ENCODE measurements at regions of chr6 and their contacts with region 1.

Region 1: DNA sequence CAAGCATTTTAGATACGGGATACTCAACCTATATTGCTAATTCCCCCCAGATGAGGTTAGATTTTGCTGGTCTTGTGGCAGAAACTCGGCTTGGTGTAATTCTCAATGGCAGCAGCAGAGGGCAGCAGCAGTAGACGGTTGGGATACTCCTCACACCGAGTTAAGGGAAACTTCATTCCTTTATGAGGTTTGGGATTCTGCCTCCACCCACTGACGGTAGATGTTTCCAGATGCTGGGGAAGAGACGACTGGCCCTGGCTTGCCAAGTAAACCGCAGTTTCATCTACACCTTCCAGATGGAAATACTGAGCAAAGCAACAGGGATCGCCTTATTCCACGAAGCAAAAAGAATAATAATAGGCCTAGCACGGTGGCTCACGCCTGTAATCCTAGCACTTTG is 8.2 kb upstream of the TBC1D7 start:
- DNase-seq: peak; percentile 14 to 80
- H3K4me3 ChIP-seq: no peak overlapping the region
- H3K27ac ChIP-seq: no peak overlapping the region
- H3K4me1 ChIP-seq: no peaks in the 10 kb centered on the region
- H3K27me3 ChIP-seq: no peaks in the 10 kb centered on the region
- CTCF ChIP-seq: peak; percentile 84 to 96 (median 91)

Region 2: DNA sequence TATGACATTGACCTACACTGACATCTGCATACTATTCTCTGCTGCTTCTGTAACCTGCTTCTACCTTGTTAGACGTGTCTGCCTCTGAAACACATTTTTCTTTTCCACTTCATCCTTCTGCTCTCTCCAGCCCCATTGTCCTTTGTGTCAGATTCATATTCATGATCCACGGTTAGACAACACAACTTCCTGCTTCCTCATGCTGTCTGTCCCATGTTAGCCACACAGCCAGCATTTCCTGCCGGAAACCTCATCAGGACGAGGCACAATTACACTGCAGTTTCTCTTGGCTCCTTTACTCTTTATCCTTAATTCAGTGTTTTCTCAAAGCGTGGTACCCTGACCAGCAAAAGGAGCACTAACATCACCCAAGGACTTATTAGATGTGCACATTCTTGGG is 158.4 kb before region 1 on chr6:
- intact Hi-C with region 1: no loop called
- DNase-seq: no peak
- H3K4me3 ChIP-seq: no peak overlapping the region
- H3K27ac ChIP-seq: no peak overlapping the region
- H3K4me1 ChIP-seq: no peaks in the 10 kb centered on the region
- H3K27me3 ChIP-seq: no peaks in the 10 kb centered on the region
- CTCF ChIP-seq: no peak

Region 3: GRCh38 chr6:13296536-13296997 is 40.0 kb before region 1 on chr6:
- intact Hi-C with region 1: no loop called
- DNase-seq: no peak
- H3K4me3 ChIP-seq: no peak overlapping the region
- H3K27ac ChIP-seq: no peak overlapping the region
- H3K4me1 ChIP-seq: no peaks in the 10 kb centered on the region
- H3K27me3 ChIP-seq: no peaks in the 10 kb centered on the region
- CTCF ChIP-seq: no peak

Region 4: GRCh38 chr6:13413900-13414555 is 77.5 kb after region 1 on chr6:
- intact Hi-C with region 1: loop called (anchors 5 kb)
- DNase-seq: peak; percentile 25 to 91
- H3K4me3 ChIP-seq: no peak overlapping the region
- H3K27ac ChIP-seq: peak overlapping the region; percentile 88 to 94
- H3K4me1 ChIP-seq: peaks cover 5 to 35% of the 10 kb centered on the region in 2 donors
- H3K27me3 ChIP-seq: no peaks in the 10 kb centered on the region
- CTCF ChIP-seq: no peak

Region 5: GRCh38 chr6:13538084-13538483 is 201.5 kb after region 1 on chr6:
- intact Hi-C with region 1: loop called (anchors 1 kb)
- DNase-seq: no peak
- H3K4me3 ChIP-seq: no peak overlapping the region
- H3K27ac ChIP-seq: no peak overlapping the region
- H3K4me1 ChIP-seq: no peaks in the 10 kb centered on the region
- H3K27me3 ChIP-seq: no peaks in the 10 kb centered on the region
- CTCF ChIP-seq: peak; percentile 30 to 59 (median 39)

Region 6: DNA sequence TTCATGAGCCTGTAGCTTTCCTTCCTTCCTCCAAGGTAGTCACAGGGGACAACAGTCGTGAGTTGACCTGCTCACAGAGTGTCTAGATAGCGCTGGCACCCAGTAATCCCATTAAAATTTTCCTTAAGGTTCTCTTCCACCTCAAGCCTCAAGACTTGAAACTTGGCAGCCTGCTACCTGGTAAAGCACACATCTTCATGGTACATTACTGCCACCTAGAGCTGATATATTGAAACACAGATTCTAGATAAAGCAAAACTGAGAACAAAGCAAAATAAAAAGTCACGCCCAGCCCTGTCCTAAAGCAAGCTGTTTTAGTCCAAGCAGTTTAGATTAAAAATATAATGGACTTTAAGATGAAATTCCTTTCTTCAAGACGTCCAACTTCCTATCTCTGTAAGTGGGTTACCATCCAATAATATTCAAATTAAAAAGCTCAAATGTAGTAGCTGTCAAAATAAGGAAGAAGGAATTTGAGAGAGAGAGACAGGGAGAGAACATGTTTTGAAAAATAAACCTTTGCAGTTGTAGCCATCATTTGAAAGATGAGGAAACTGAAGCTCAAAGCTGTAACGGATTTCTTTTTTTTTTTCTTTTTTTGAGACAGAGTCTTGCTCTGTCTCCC is 730.3 kb after region 1 on chr6:
- intact Hi-C with region 1: loop called (anchors 2 kb)
- DNase-seq: no peak
- H3K4me3 ChIP-seq: no peak overlapping the region
- H3K27ac ChIP-seq: no peak overlapping the region
- H3K4me1 ChIP-seq: no peaks in the 10 kb centered on the region
- H3K27me3 ChIP-seq: no peaks in the 10 kb centered on the region
- CTCF ChIP-seq: peak; percentile 44 to 72 (median 47)

Measured in ascending aorta (tissue), 2 donors.